Posterior vena cava (tissue), 2 donors: ENCODE measurements at regions of chr5 and their contacts with region 1.

Region 1: GRCh38 chr5:181243512-181244343 is at the start of gene RACK1:
- DNase-seq: peak; percentile 96
- total RNA-seq, gene RACK1: 1,013 to 1,030 TPM

Region 2: DNA sequence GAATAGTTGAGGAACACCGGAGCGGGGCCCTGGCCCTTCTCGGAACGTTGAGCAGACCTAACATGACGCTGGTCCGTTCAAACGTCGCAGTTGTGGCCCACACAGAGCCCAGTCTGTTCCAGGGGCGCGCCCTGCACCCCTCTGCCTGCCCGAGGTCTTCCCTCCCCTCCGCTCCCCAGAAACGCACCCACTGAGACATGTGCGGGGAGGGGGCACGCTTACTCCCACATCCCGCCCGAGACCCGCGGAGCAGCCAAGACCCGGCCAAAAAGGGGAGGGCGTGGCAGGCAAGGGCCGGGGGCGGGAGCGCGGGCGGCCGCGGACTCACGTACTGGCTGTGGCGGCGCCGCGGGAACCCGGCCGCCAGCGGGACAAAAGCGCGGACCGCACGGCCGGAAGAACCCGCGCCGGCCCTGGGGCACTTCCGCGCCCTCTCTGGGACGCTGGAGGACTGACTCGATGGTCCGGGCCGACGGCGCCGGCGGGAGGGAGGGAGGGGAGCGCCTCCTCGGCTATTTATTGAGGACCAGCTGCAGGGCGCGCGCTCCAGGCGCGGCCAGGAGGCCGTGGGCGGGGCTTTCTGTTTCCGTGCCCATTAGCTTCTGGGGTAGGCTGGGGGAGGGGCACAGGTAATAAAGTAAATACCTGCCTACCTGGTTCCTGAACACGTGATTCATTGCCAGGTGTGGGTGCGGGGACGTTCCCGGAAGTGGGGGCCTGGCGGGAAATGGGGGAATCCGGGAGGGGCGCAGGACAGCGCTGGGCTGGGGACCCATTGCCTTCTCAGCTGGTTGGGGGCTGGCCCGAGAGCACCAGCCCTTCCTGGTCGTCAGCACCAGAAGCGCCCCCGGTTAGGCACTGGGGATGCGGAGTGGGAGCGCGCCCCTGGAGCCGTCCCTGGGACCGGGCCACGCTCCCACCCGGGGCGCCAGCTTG is 382.6 kb before region 1 on chr5 and contains the start of gene ZFP62:
- intact Hi-C with region 1: loop called in 1 of 2 experiments (anchors 10 kb)
- DNase-seq: peak; percentile 97
- total RNA-seq, gene ZFP62: 21.2 to 22.2 TPM

Region 3: GRCh38 chr5:181181650-181182565 is 61.8 kb before region 1 on chr5:
- intact Hi-C with region 1: loop called in 1 of 2 experiments (anchors 10 kb)
- DNase-seq: peak; percentile 85

Region 4: DNA sequence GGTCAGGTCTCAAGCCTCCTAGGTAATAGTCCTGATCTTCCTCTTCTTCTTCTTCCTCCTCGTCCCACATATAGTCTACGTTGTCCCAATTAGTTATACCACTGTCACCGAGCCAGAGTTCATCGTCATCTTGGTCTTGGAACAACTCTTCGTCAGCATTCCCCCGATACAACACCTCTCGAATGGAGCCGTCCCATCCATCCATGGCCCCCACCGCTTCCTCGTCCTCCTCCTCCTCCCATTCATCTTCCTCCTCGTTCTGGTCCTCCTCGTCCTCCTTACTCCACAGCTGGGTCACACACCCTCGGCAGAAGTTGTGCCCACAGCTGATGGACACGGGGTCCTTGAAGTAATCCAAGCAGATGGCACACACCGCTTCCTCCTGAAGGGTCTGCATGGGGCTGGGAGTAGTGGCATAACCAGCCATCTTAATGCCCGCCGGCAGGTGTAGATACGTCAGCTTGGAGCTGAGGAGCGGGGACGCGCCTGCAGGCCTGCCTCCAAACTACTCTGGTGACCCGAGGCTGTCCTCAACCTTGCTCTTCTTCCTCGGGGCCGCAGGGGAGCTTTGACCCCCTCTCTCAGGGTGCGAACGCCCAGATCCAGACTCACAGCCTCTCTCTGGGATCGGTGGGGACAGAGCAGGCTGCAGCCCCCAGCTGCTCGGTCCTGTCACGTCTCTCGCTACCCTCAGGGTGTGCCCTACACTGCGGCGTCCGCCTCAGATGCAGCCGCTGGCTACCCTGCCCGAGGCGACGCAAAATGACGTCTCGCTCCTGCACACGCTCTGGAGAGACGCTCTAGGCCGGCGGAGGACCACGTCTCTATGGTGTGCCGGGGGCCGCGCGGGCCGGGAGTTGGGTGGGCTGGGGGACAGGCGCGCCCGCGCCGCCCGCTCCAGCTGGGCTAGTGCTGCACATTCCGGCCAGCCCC is 16.9 kb after region 1 on chr5 and contains the start of gene TRIM52:
- intact Hi-C with region 1: loop called in 1 of 2 experiments (anchors 1 kb)
- DNase-seq: peak; percentile 98
- total RNA-seq, gene TRIM52: 9.5 to 12.1 TPM